ENCODE measurements at regions of chr7 and their contacts with region 1.

Region 1: GRCh38 chr7:64685091-64685490 is 19.2 kb downstream of the ZNF107 start:
- DNase-seq: no peak
- ATAC-seq: no peak
- H3K4me3 ChIP-seq: no peak overlapping the region
- H3K4me3 Mint-ChIP-seq: peak overlapping the region in 4 of 10 donors; percentile 6 to 52 (median 22)
- H3K27ac ChIP-seq: no peak overlapping the region
- H3K27ac Mint-ChIP-seq: peak overlapping the region in 2 of 9 donors; percentile 36 to 68
- H3K4me1 ChIP-seq: no peaks in the 10 kb centered on the region
- H3K4me1 Mint-ChIP-seq: peaks cover 16 to 57% (median 43%) of the 10 kb centered on the region in 7 donors
- H3K27me3 ChIP-seq: no peaks in the 10 kb centered on the region
- H3K27me3 Mint-ChIP-seq: no peaks in the 10 kb centered on the region

Region 2: DNA sequence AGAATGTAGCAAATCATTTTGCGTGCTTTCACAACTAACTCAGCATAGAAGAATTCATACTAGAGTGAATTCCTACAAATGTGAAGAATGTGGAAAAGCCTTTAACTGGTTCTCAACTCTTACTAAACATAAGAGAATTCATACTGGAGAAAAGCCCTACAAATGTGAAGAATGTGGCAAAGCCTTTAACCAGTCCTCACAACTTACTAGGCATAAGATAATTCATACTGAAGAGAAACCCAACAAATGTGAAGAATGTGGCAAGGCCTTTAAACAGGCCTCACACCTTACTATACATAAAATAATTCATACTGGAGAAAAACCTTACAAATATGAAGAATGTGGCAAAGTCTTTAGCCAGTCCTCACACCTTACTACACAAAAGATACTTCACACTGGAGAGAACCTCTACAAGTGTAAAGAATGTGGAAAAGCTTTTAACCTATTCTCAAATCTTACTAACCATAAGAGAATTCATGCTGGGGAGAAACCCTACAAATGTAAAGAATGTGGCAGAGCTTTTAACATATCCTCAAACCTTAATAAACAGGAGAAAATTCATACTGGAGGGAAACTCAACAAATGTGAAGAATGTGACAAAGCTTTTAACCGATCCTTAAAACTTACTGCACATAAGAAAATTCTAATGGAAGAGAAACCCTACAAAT is 21.7 kb after region 1 on chr7:
- CTCF ChIA-PET with region 1: no interaction called
- POLR2A ChIA-PET with region 1: no interaction called
- intact Hi-C with region 1: loop called in 1 of 2 experiments (anchors 2 kb)
- DNase-seq: no peak
- ATAC-seq: no peak
- H3K4me3 ChIP-seq: peak overlapping the region; percentile 18
- H3K4me3 Mint-ChIP-seq: no peak overlapping the region
- H3K27ac ChIP-seq: no peak overlapping the region
- H3K27ac Mint-ChIP-seq: no peak overlapping the region
- H3K4me1 ChIP-seq: no peaks in the 10 kb centered on the region
- H3K4me1 Mint-ChIP-seq: no peaks in the 10 kb centered on the region
- H3K27me3 ChIP-seq: no peaks in the 10 kb centered on the region
- H3K27me3 Mint-ChIP-seq: no peaks in the 10 kb centered on the region

Region 3: DNA sequence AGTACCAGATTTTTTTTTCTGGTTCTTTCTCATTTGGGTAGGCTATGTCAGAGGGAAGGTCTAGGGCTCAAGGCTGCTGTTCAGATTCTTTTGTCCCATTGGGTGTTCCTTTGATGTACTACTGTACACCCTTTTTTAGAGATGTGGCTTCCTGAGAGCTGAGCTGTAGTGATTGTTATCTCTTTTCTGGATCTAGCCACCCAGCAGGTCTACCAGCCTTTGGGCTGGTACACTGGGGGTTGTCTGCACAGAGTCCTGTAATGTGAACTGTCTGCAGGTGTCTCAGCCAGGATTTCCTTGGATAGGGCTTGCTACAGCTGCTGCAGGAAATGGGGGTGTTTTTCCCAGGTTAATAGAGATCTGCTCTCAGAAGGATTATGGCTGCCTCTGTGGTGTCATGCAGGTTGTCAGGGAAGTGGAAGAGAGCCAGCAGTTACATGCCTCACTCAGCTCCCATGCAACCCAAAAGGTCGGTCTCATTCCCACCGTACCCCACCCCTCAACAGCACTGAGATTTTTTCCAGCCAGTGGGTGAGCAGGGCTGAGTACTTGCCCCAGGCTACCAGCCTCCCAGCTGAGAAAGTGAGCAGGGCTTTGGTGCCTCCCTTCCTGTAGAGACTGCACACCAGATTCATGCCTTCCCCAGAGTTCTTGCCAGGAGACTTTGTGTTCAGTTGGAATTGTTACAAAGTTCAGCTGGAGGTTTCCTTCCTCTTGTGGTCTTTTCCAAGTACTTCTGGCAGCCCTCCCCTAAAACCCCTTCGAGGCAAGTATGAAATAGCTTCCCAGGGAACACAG is 44.2 kb after region 1 on chr7:
- CTCF ChIA-PET with region 1: no interaction called
- POLR2A ChIA-PET with region 1: no interaction called
- intact Hi-C with region 1: no loop called
- DNase-seq: no peak
- ATAC-seq: no peak
- H3K4me3 ChIP-seq: no peak overlapping the region
- H3K4me3 Mint-ChIP-seq: no peak overlapping the region
- H3K27ac ChIP-seq: no peak overlapping the region
- H3K27ac Mint-ChIP-seq: no peak overlapping the region
- H3K4me1 ChIP-seq: no peaks in the 10 kb centered on the region
- H3K4me1 Mint-ChIP-seq: no peaks in the 10 kb centered on the region
- H3K27me3 ChIP-seq: no peaks in the 10 kb centered on the region
- H3K27me3 Mint-ChIP-seq: peaks cover 0 to 7% (median 0%) of the 10 kb centered on the region in 5 donors